ENCODE measurements at regions of chr20 and their contacts with region 1.

Region 1: GRCh38 chr20:41047975-41048305 is 19.3 kb downstream of the TOP1 start:
- DNase-seq: no peak
- H3K4me3 Mint-ChIP-seq: peak overlapping the region; percentile 78
- H3K27ac Mint-ChIP-seq: peak overlapping the region; percentile 91
- H3K4me1 Mint-ChIP-seq: peaks cover 83% of the 10 kb centered on the region
- H3K27me3 Mint-ChIP-seq: no peaks in the 10 kb centered on the region

Region 2: DNA sequence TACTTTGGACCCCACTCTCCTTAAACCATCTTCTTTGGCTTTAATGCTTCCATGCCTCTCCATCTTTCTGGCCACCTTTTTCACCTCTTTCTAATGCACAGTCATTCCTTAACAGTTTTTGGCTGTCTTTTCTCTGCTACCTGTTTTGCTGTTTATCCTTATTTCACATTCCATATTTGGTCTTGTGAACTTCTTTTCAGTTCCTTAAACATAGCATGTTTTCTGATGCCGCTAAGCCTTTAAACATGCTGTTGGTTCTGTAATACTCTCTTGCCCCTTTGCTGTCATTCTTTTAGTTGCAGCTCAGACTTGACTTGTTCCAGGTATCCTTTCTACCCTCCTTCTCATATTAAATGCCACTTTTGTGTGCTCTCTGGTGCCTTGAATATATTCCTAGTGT is 16.4 kb after region 1 on chr20:
- intact Hi-C with region 1: loop called (anchors 2 kb)
- DNase-seq: no peak
- H3K4me3 Mint-ChIP-seq: no peak overlapping the region
- H3K27ac Mint-ChIP-seq: no peak overlapping the region
- H3K4me1 Mint-ChIP-seq: peaks cover 28% of the 10 kb centered on the region
- H3K27me3 Mint-ChIP-seq: no peaks in the 10 kb centered on the region

Region 3: GRCh38 chr20:41150664-41151063 is 102.7 kb after region 1 on chr20:
- intact Hi-C with region 1: loop called (anchors 5 kb)
- DNase-seq: no peak
- H3K4me3 Mint-ChIP-seq: peak overlapping the region; percentile 40
- H3K27ac Mint-ChIP-seq: peak overlapping the region; percentile 76
- H3K4me1 Mint-ChIP-seq: peaks cover 84% of the 10 kb centered on the region
- H3K27me3 Mint-ChIP-seq: no peaks in the 10 kb centered on the region

Measured in activated T-helper 2 cell treated with anti-CD3 and anti-CD28 coated beads, Interferon-gamma antibody, Interleukin-2, Interleukin-4, amounts not matched to agents 10 μg/mL and 5 μg/mL and 100 μg/mL, durations not matched to agents 14 hours and 24 hours and 36 hours (primary cell).